ENCODE measurements at regions of chr4 and their contacts with region 1.

Region 1: DNA sequence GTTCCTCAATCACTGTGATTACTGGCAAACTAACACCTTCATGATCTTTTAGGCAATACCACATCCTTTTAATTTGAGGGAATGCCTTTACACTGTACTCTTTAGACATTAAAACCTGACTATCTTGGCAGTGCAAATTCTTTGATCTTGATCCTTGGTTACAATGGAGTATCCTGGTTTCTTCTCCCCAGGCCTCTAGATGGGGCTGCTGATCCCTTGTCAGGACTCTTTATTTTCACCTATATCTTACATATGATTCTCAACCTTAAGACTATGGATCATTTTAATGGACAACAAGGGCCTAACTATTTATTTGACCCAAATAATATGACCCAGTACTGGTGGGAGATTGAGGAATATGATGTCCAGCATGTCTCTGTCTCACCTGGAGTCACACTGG is 1005.5 kb upstream of the INTU start:
- DNase-seq: peak in 2 of 4 experiments; percentile 17 to 49
- ATAC-seq: peak; percentile 84
- H3K4me3 ChIP-seq: no peak overlapping the region
- H3K27ac ChIP-seq: no peak overlapping the region
- H3K4me1 ChIP-seq: no peaks in the 10 kb centered on the region
- H3K27me3 ChIP-seq: no peaks in the 10 kb centered on the region
- CTCF ChIP-seq: peak; percentile 19 to 48 (median 48); a peak in 5 of 6 replicates
- EP300 ChIP-seq: no peak
- POLR2A ChIP-seq: no peak
- RAD21 ChIP-seq: peak in 1 of 2 experiments; percentile 43; a peak in 2 of 4 replicates

Region 2: GRCh38 chr4:126794363-126794762 is 167.1 kb after region 1 on chr4:
- CTCF ChIA-PET with region 1: no interaction called
- POLR2A ChIA-PET with region 1: no interaction called
- in situ Hi-C with region 1: no loop called
- intact Hi-C with region 1: loop called (anchors 5 kb)
- DNase-seq: peak in 1 of 4 experiments; percentile 46
- ATAC-seq: peak; percentile 66
- H3K4me3 ChIP-seq: no peak overlapping the region
- H3K27ac ChIP-seq: peak overlapping the region; percentile 35
- H3K4me1 ChIP-seq: peaks cover 0 to 7% of the 10 kb centered on the region in 2 experiments; a peak in 2 of 5 replicates
- H3K27me3 ChIP-seq: no peaks in the 10 kb centered on the region
- CTCF ChIP-seq: no peak
- EP300 ChIP-seq: peak; percentile 70
- POLR2A ChIP-seq: no peak
- RAD21 ChIP-seq: peak in 1 of 2 experiments; percentile 14; a peak in 2 of 4 replicates

Measured in K562 (cell line).